Activated CD4-positive, alpha-beta memory T cell treated with anti-CD3 and anti-CD28 coated beads, Interleukin-2, amount 10 ng/mL, durations not matched to agents 7 days and 5 days (primary cell): ENCODE measurements at regions of chr11 and their contacts with region 1.

Region 1: GRCh38 chr11:93512073-93512475 is 31.1 kb downstream of the SMCO4 start:
- DNase-seq: peak; percentile 50
- H3K4me3 Mint-ChIP-seq: peak overlapping the region; percentile 54
- H3K27ac Mint-ChIP-seq: peak overlapping the region; percentile 89
- H3K4me1 Mint-ChIP-seq: peaks cover 44% of the 10 kb centered on the region
- H3K27me3 Mint-ChIP-seq: no peaks in the 10 kb centered on the region

Region 2: DNA sequence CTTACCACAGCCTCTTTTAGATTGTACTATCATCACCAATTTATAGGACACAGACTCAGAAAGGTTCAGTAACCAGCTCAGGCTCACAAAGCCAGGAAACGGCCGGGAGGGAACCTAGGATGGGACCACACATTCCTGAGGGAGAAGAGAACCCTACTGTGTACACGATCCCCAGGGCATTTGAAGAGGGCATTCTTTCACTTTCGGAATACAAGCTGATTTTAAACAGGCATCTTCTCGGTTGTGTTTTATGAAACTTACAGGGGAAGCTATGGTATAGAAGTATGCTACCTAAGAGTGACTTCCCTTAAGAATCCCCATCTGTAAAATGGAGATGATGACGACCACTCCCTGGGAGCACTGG is 12.1 kb after region 1 on chr11:
- CTCF ChIA-PET with region 1: interaction called, 4 read pairs
- POLR2A ChIA-PET with region 1: interaction called, 30 read pairs
- DNase-seq: no peak
- H3K4me3 Mint-ChIP-seq: peak overlapping the region; percentile 39
- H3K27ac Mint-ChIP-seq: peak overlapping the region; percentile 80
- H3K4me1 Mint-ChIP-seq: peaks cover 91% of the 10 kb centered on the region
- H3K27me3 Mint-ChIP-seq: no peaks in the 10 kb centered on the region

Region 3: DNA sequence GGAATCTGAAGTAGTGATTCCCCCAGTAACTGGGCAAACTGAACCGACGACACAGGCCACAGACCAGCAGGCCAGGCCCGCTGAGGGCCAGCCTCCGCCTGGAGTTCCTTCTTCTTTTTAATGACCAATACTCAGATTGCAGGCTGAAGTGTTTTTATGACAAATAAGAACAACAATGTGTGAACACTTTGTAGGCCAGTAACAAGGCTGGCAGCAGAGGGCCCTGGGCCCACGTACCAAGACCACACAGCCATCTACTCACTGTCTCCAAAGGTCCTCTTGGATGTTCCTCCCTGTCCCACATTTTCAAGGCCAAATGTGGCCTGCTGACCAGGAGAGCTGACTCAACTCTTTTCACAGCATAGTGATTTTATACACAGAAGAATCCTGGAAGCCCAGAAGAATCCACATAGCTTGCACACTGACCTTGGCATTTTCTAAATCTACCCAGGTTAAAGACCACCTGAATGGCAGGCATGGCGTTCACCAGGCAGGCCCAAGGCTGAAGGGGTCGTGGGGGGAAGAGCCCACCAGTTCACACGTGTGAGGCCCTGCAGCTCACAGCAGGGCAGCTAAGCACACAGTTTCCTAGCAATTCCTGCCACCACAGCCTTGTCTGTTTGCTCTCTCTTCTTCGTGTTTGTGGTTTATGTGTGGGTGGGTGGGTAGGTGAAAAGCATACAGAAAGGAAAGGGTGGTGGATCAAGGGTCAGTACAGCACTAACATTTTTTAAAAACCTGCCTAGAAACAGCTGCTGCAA is 17.8 kb after region 1 on chr11:
- CTCF ChIA-PET with region 1: no interaction called
- POLR2A ChIA-PET with region 1: interaction called, 30 read pairs
- DNase-seq: no peak
- H3K4me3 Mint-ChIP-seq: peak overlapping the region; percentile 42
- H3K27ac Mint-ChIP-seq: peak overlapping the region; percentile 84
- H3K4me1 Mint-ChIP-seq: peaks cover 83% of the 10 kb centered on the region
- H3K27me3 Mint-ChIP-seq: no peaks in the 10 kb centered on the region

Region 4: GRCh38 chr11:93552874-93553273 is 40.8 kb after region 1 on chr11:
- CTCF ChIA-PET with region 1: no interaction called
- POLR2A ChIA-PET with region 1: no interaction called
- DNase-seq: no peak
- H3K4me3 Mint-ChIP-seq: no peak overlapping the region
- H3K27ac Mint-ChIP-seq: no peak overlapping the region
- H3K4me1 Mint-ChIP-seq: peaks cover 6% of the 10 kb centered on the region
- H3K27me3 Mint-ChIP-seq: peaks cover 33% of the 10 kb centered on the region

Region 5: GRCh38 chr11:93672280-93672679 is 160.2 kb after region 1 on chr11:
- CTCF ChIA-PET with region 1: no interaction called
- POLR2A ChIA-PET with region 1: no interaction called
- DNase-seq: no peak
- H3K4me3 Mint-ChIP-seq: no peak overlapping the region
- H3K27ac Mint-ChIP-seq: no peak overlapping the region
- H3K4me1 Mint-ChIP-seq: peaks cover 17% of the 10 kb centered on the region
- H3K27me3 Mint-ChIP-seq: no peaks in the 10 kb centered on the region

Region 6: GRCh38 chr11:93784152-93784934 is 272.3 kb after region 1 on chr11 and contains the start of gene MED17:
- CTCF ChIA-PET with region 1: no interaction called
- POLR2A ChIA-PET with region 1: no interaction called
- DNase-seq: peak; percentile 91
- H3K4me3 Mint-ChIP-seq: peak within 1 kb of the TSS; percentile 97
- H3K27ac Mint-ChIP-seq: peak within 1 kb of the TSS; percentile 90
- H3K4me1 Mint-ChIP-seq: peaks cover 50% of the 10 kb centered on the region
- H3K27me3 Mint-ChIP-seq: no peaks in the 10 kb centered on the region
- total RNA-seq, gene MED17: 40.6 to 42.9 TPM